ENCODE measurements at regions of chr3 and their contacts with region 1.

Region 1: GRCh38 chr3:131349946-131350347 is 31.6 kb upstream of the NUDT16 start:
- DNase-seq: peak; percentile 89
- ATAC-seq: peak; percentile 53
- H3K4me3 ChIP-seq: peak overlapping the region; percentile 12; the same call in 1 of the 2 replicates
- H3K27ac ChIP-seq: peak overlapping the region; percentile 85
- H3K4me1 ChIP-seq: peaks cover 69% of the 10 kb centered on the region
- H3K27me3 ChIP-seq: no peaks in the 10 kb centered on the region
- CTCF ChIP-seq: no peak

Region 2: GRCh38 chr3:131036200-131036816 is 313.6 kb before region 1 on chr3:
- CTCF ChIA-PET with region 1: no interaction called
- POLR2A ChIA-PET with region 1: no interaction called
- intact Hi-C with region 1: no loop called
- DNase-seq: peak; percentile 87
- ATAC-seq: peak; percentile 96
- H3K4me3 ChIP-seq: no peak overlapping the region
- H3K27ac ChIP-seq: peak overlapping the region; percentile 63
- H3K4me1 ChIP-seq: peaks cover 31% of the 10 kb centered on the region
- H3K27me3 ChIP-seq: no peaks in the 10 kb centered on the region
- CTCF ChIP-seq: no peak

Region 3: DNA sequence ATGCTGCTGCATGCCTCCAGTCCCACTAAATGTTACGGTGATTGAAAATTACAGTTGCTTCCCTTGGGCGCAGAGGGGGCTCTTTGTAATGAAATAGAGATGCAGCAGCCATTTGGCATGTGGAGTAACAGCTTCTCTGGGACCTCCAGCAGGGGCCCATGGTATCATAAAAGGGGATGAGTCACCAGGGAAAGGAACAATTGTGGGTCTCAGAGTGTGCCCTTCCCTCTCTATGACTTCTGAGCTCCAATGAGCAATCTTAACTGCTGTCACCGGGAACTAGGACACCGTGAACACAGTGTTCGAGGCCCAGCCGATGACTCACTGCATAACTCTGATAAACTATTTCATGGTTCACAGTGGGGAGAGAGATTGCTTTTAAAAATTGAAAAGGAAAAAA is 133.1 kb before region 1 on chr3:
- CTCF ChIA-PET with region 1: no interaction called
- POLR2A ChIA-PET with region 1: no interaction called
- intact Hi-C with region 1: loop called (anchors 10 kb)
- DNase-seq: peak; percentile 80
- ATAC-seq: peak; percentile 73
- H3K4me3 ChIP-seq: peak overlapping the region; percentile 44; the same call in 1 of the 2 replicates
- H3K27ac ChIP-seq: peak overlapping the region; percentile 100
- H3K4me1 ChIP-seq: peaks cover 25% of the 10 kb centered on the region
- H3K27me3 ChIP-seq: no peaks in the 10 kb centered on the region
- CTCF ChIP-seq: no peak

Region 4: GRCh38 chr3:131361464-131362421 is 11.8 kb after region 1 on chr3:
- CTCF ChIA-PET with region 1: no interaction called
- POLR2A ChIA-PET with region 1: no interaction called
- intact Hi-C with region 1: loop called (anchors 1 kb)
- DNase-seq: peak; percentile 88
- ATAC-seq: peak; percentile 95
- H3K4me3 ChIP-seq: peak overlapping the region; percentile 69
- H3K27ac ChIP-seq: peak overlapping the region; percentile 36
- H3K4me1 ChIP-seq: peaks cover 11% of the 10 kb centered on the region
- H3K27me3 ChIP-seq: no peaks in the 10 kb centered on the region
- CTCF ChIP-seq: no peak

Region 5: DNA sequence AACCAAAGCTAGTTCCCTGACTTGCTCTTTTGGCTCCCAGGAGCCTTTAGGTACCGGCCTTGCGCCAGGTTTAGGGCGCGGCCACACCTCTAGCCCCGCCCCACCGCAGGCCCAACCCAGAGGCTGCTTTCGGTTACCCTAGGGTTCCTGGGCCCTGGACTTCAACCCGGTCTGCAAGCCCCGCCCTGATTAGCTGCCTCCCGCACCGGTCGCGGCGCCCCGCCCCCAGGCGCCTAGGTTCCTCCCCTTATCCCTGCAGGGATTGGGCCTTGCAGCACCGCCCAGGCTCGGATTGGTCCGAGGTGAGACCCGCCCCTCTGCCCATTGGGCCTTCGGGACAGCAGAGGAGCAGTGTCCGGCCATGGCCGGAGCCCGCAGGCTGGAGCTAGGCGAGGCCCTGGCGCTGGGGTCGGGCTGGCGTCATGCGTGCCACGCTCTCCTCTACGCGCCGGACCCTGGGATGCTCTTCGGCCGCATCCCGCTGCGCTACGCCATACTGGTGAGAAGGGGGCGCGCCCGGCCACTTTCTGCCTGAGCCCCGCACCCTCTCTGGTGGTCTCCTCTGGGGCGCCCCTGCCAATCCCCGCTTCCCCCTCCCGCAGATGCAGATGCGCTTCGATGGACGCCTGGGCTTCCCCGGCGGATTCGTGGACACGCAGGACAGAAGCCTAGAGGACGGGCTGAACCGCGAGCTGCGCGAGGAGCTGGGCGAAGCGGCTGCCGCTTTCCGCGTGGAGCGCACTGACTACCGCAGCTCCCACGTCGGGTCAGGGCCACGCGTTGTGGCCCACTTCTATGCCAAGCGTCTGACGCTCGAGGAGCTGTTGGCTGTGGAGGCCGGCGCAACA is 31.7 kb after region 1 on chr3 and contains the start of gene NUDT16:
- CTCF ChIA-PET with region 1: no interaction called
- POLR2A ChIA-PET with region 1: interaction called, 5 read pairs
- intact Hi-C with region 1: loop called (anchors 5 kb)
- DNase-seq: peak; percentile 97
- ATAC-seq: peak; percentile 97
- H3K4me3 ChIP-seq: peak within 1 kb of the TSS; percentile 83
- H3K27ac ChIP-seq: no peak within 1 kb of the TSS
- H3K4me1 ChIP-seq: peaks cover 6% of the 10 kb centered on the region; the same call in 1 of the 2 replicates
- H3K27me3 ChIP-seq: no peaks in the 10 kb centered on the region
- CTCF ChIP-seq: no peak
- total RNA-seq, gene NUDT16: 7.9 and 8.6 TPM in 2 replicates

Measured in PC-3 (cell line).